GM13976 (cell line): ENCODE measurements at regions of chr6 and their contacts with region 1.

Region 1: GRCh38 chr6:43769526-43770416 is at the start of gene VEGFA:
- DNase-seq: peak; percentile 98
- CTCF ChIP-seq: peak; percentile 98

Region 2: DNA sequence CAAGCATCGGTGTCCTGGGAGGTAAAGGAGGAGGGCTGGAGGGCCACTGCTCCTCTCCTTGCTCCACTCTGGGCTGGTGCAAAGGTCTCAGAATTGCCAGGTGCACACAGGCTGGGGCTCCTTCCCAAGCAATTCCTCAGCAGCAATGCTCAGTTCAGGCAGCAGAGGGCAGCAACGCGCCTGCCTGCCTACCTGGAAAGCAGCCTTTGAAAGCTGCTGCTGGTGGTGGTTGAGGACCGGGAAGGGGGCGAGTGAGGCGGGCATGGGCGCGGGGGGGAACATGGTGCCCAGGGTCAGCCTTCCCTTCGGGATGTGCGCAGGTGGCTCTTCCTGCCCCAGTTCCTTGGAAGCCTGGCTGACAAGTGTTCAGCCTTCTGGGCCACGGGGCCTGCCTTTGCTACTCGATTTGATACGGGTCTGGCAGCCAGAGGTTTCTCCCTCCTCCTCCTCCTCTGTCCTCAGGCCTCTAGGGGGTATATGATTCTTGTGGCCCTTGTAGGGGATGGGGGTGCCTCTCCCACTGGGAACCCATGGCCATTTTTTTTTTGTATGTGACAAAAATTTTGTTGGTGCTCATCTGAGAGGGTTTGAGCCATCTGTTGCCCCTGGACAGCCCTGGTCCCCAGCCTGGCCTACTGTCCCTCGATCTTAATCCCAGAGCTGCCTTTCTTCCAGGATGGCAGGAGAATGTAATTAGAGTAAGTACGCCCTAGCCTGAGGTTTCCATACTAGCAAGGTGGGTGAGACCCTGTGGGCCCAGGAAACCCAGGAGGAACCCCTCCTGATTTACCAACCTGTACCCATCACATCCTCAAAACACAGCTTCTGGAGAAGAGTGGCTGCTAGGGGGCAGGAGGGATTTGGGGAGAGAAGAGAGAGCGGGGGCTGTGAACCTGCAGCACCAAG is 102.3 kb before region 1 on chr6:
- in situ Hi-C with region 1: loop called (anchors 10 kb)
- DNase-seq: peak; percentile 87
- CTCF ChIP-seq: peak; percentile 99

Region 3: GRCh38 chr6:44067173-44068139 is 297.7 kb after region 1 on chr6:
- in situ Hi-C with region 1: loop called (anchors 5 kb)
- DNase-seq: no peak
- CTCF ChIP-seq: no peak

Region 4: GRCh38 chr6:44527181-44527580 is 757.4 kb after region 1 on chr6:
- in situ Hi-C with region 1: no loop called
- DNase-seq: no peak
- CTCF ChIP-seq: no peak